ENCODE measurements at regions of chr1 and their contacts with region 1.

Region 1: DNA sequence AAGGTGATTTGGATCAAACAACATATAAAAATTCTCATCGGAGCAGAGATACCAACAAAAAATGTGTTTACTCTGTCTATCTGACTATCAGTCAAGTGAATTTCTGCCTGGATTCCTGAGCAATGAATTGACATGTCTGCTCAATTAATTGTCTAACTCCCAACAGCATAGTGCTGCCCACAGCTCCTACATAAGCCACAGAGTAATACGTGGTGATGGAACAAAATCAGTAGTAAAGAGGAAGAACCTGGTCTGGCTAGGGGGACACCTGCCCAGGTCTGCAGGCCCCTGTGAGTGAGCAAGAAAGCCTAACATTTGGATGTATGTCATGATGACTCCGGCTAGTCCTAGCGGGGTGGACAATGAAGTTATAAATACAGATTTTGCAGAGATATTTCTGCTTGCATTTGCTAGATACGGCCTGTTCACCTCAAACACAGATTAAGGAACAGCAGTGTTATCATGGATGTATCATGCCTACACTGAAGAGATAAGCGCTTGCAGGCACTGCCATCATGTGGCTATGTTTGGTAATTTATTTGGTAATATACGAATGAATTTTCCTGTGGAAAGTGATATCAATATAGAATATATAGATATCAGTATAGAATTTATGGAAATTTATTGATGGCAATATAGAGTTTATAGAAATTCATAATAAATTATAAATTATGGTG is 69.6 kb upstream of the LRRC8B start:
- DNase-seq: peak; percentile 34
- ATAC-seq: peak; percentile 89
- H3K4me3 ChIP-seq: no peak overlapping the region
- H3K27ac ChIP-seq: no peak overlapping the region
- H3K4me1 ChIP-seq: no peaks in the 10 kb centered on the region
- H3K27me3 ChIP-seq: no peaks in the 10 kb centered on the region
- CTCF ChIP-seq: peak; percentile 46 to 76 (median 64)
- POLR2A ChIP-seq: no peak
- RAD21 ChIP-seq: peak; percentile 87

Region 2: GRCh38 chr1:88935522-88936222 is 519.3 kb before region 1 on chr1:
- CTCF ChIA-PET with region 1: no interaction called
- POLR2A ChIA-PET with region 1: no interaction called
- RAD21 ChIA-PET with region 1: no interaction called
- intact Hi-C with region 1: loop called (anchors 2 kb)
- DNase-seq: peak; percentile 16
- ATAC-seq: peak; percentile 59
- H3K4me3 ChIP-seq: no peak overlapping the region
- H3K27ac ChIP-seq: no peak overlapping the region
- H3K4me1 ChIP-seq: no peaks in the 10 kb centered on the region
- H3K27me3 ChIP-seq: no peaks in the 10 kb centered on the region
- CTCF ChIP-seq: peak in 2 of 3 experiments; percentile 41 to 74; a peak in 3 of 6 replicates
- POLR2A ChIP-seq: no peak
- RAD21 ChIP-seq: peak; percentile 53

Region 3: GRCh38 chr1:88973520-88974137 is 481.4 kb before region 1 on chr1:
- CTCF ChIA-PET with region 1: interaction called, 3 read pairs
- POLR2A ChIA-PET with region 1: no interaction called
- RAD21 ChIA-PET with region 1: no interaction called
- intact Hi-C with region 1: loop called (anchors 1 kb)
- DNase-seq: peak; percentile 33
- ATAC-seq: peak; percentile 61
- H3K4me3 ChIP-seq: no peak overlapping the region
- H3K27ac ChIP-seq: no peak overlapping the region
- H3K4me1 ChIP-seq: no peaks in the 10 kb centered on the region
- H3K27me3 ChIP-seq: no peaks in the 10 kb centered on the region
- CTCF ChIP-seq: peak; percentile 39 to 72 (median 49); a peak in 4 of 6 replicates
- POLR2A ChIP-seq: no peak
- RAD21 ChIP-seq: peak; percentile 59

Region 4: GRCh38 chr1:88998716-88999115 is 456.3 kb before region 1 on chr1:
- CTCF ChIA-PET with region 1: interaction called, 4 read pairs
- POLR2A ChIA-PET with region 1: no interaction called
- RAD21 ChIA-PET with region 1: no interaction called
- intact Hi-C with region 1: loop called (anchors 1 kb)
- DNase-seq: peak; percentile 49
- ATAC-seq: peak; percentile 95
- H3K4me3 ChIP-seq: no peak overlapping the region
- H3K27ac ChIP-seq: no peak overlapping the region
- H3K4me1 ChIP-seq: peaks cover 0 to 1% of the 10 kb centered on the region in 2 experiments; a peak in 2 of 4 replicates
- H3K27me3 ChIP-seq: no peaks in the 10 kb centered on the region
- CTCF ChIP-seq: peak; percentile 22 to 52 (median 45); a peak in 3 of 6 replicates
- POLR2A ChIP-seq: no peak
- RAD21 ChIP-seq: peak; percentile 75

Region 5: DNA sequence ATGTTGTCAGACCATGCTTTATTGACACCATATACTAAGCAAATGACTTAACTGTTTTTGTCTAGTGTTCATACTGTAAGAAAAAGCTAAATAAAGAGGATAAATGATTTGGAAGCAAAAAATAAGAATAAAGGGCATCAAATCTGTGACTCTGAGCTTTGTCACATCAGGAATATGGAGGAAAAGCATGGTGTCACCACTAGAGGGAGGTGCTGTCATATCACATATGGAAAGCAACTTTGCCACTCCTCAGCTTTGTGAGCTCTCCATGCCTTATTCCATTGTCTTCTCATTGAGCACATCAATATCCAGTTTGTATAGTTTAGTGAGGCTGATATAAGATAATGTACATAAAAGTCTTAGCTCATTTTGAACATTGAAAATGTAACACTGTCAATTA is 369.2 kb before region 1 on chr1:
- CTCF ChIA-PET with region 1: interaction called, 37 read pairs
- POLR2A ChIA-PET with region 1: no interaction called
- RAD21 ChIA-PET with region 1: interaction called in 1 of 2 experiments, 4 read pairs
- intact Hi-C with region 1: loop called (anchors 2 kb)
- DNase-seq: peak; percentile 40
- ATAC-seq: peak; percentile 78
- H3K4me3 ChIP-seq: no peak overlapping the region
- H3K27ac ChIP-seq: no peak overlapping the region
- H3K4me1 ChIP-seq: no peaks in the 10 kb centered on the region
- H3K27me3 ChIP-seq: no peaks in the 10 kb centered on the region
- CTCF ChIP-seq: peak; percentile 74 to 84 (median 82)
- POLR2A ChIP-seq: no peak
- RAD21 ChIP-seq: peak; percentile 88

Region 6: GRCh38 chr1:89358287-89358893 is 96.6 kb before region 1 on chr1:
- CTCF ChIA-PET with region 1: no interaction called
- POLR2A ChIA-PET with region 1: no interaction called
- RAD21 ChIA-PET with region 1: no interaction called
- intact Hi-C with region 1: loop called (anchors 1 kb)
- DNase-seq: peak; percentile 63
- ATAC-seq: peak; percentile 96
- H3K4me3 ChIP-seq: no peak overlapping the region
- H3K27ac ChIP-seq: no peak overlapping the region
- H3K4me1 ChIP-seq: no peaks in the 10 kb centered on the region
- H3K27me3 ChIP-seq: no peaks in the 10 kb centered on the region
- CTCF ChIP-seq: peak; percentile 65 to 90 (median 81)
- POLR2A ChIP-seq: no peak
- RAD21 ChIP-seq: peak; percentile 88

Region 7: GRCh38 chr1:89681045-89681729 is 226.2 kb after region 1 on chr1:
- CTCF ChIA-PET with region 1: no interaction called
- POLR2A ChIA-PET with region 1: no interaction called
- RAD21 ChIA-PET with region 1: no interaction called
- intact Hi-C with region 1: no loop called
- DNase-seq: no peak
- ATAC-seq: no peak
- H3K4me3 ChIP-seq: no peak overlapping the region
- H3K27ac ChIP-seq: no peak overlapping the region
- H3K4me1 ChIP-seq: no peaks in the 10 kb centered on the region
- H3K27me3 ChIP-seq: no peaks in the 10 kb centered on the region
- CTCF ChIP-seq: no peak
- POLR2A ChIP-seq: no peak
- RAD21 ChIP-seq: no peak